Activated CD4-positive, alpha-beta memory T cell treated with anti-CD3 and anti-CD28 coated beads for 36 hours (primary cell): ENCODE measurements at regions of chr2 and their contacts with region 1.

Region 1: DNA sequence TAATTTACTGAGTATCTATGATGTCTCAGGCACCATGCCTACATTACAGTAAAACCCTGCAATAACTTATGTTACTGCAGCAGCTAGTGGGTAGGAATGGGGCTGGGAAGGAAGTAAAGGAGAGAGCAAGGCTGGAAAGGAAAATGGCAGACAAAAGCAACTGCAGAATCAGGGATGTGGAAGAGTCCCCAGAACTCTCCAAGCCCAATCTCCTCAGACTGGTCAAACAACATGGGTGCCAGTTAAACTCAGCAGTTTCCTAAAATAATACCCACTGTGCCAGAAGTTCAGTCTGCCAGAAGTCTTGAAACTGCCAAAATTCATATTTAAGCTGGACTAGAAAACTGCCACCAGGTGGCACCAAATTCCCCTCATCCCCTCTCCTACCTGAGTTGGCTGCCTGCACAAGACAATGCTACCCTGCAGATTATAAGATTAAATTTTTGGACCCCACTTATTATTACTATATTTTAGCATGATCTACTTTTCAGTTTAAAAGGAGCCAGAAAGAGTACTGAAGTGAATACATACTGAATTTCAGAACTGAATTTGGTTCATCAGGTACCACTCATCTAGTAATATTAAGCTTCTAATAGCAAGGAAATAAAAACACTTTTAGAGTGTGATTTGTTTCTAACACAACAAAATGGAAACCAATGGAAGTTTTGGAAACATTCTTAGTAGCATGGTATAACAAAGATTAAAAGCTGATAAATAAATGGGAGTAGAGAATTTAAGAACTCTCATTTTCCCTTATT is 86.8 kb upstream of the DNER start:
- DNase-seq: peak; percentile 79
- H3K4me3 Mint-ChIP-seq: no peak overlapping the region
- H3K27ac Mint-ChIP-seq: no peak overlapping the region
- H3K4me1 Mint-ChIP-seq: no peaks in the 10 kb centered on the region
- H3K27me3 Mint-ChIP-seq: no peaks in the 10 kb centered on the region

Region 2: DNA sequence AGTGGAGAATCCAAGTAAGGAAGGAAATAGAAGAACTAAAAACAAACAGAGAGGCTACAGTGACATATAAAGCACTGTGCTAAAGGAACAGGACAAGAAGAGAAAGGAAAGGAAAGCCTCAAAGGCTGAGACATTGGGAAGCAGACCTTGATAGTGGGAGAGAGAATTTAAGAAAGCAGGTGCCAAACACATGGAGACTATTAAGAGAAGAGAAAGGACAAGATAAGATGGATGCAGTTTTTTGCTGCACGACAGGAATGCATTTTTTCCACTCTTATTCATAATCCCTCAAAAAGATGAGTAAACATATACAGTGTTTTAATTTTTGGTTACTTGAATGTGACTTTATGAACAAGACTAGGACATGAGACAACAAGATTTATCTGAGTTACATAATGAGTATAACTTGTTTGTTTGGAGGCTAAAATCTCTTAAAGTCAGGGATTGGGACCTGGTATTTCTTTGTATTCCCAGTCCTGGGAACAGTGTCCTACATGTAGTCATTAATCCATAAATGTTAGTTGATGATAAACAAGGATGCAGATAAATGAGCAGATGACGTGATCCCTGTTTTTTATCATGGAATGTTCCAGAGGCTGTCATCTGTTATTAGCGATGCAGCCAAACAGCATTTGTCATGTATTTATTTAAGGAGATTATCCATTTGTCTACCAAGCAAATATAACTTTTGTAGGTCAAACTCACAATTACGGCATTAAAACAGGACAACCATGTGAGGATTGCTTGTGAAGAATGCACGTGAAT is 228.5 kb before region 1 on chr2:
- CTCF ChIA-PET with region 1: no interaction called
- POLR2A ChIA-PET with region 1: no interaction called
- intact Hi-C with region 1: no loop called
- DNase-seq: no peak
- H3K4me3 Mint-ChIP-seq: no peak overlapping the region
- H3K27ac Mint-ChIP-seq: no peak overlapping the region
- H3K4me1 Mint-ChIP-seq: no peaks in the 10 kb centered on the region
- H3K27me3 Mint-ChIP-seq: peaks cover 11% of the 10 kb centered on the region

Region 3: DNA sequence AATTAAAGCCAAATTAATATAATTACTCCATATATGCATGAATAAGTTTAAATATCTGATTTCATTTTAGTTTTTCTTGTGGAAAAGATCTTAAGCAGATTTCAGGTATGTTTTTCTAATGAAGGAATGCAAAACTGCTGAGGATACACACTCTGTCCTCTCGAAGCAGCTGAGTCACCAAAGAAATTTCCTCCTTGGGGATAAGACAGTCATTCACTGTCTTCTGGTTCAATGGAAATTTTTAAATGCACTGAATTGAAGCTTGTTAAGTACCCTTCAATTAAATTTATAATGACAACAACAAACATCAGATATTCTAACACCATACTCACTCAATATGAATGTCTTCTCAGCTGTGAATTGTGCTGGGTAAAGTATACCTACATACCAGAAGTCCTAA is 14.7 kb after region 1 on chr2:
- CTCF ChIA-PET with region 1: interaction called, 17 read pairs
- POLR2A ChIA-PET with region 1: no interaction called
- intact Hi-C with region 1: no loop called
- DNase-seq: no peak
- H3K4me3 Mint-ChIP-seq: no peak overlapping the region
- H3K27ac Mint-ChIP-seq: no peak overlapping the region
- H3K4me1 Mint-ChIP-seq: peaks cover 3% of the 10 kb centered on the region
- H3K27me3 Mint-ChIP-seq: no peaks in the 10 kb centered on the region